ENCODE measurements at regions of chr7 and their contacts with region 1.

Region 1: DNA sequence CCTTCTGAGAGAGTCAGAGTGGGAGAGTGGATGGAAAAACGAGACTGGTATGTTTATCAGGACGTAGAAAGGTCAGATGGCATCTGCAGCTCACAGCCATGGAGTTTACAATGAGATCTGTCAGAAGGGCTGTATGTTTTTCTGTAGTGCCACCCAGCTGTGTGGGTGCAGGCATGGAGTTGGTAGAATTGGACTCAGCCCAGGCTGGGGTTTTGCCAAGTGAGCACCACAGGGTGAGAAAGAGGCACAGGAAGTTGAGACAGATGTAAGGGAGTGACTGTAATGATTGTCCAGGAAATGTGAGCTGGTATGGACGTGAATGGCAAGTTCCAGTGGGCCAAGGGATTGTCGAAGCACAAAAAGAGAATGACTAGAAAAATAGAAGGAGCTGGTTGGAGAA is 9.1 kb upstream of the ZYX start:
- DNase-seq: peak; percentile 77 to 87 (median 82)
- H3K4me3 ChIP-seq: peak overlapping the region in 1 of 3 experiments; percentile 18
- H3K4me3 Mint-ChIP-seq: peak overlapping the region in 1 of 2 donors; percentile 48
- H3K27ac ChIP-seq: peak overlapping the region; percentile 36 to 66
- H3K27ac Mint-ChIP-seq: peak overlapping the region; percentile 77 to 92 (median 83)
- H3K4me1 ChIP-seq: peaks cover 56 to 58% of the 10 kb centered on the region in 2 donors
- H3K4me1 Mint-ChIP-seq: peaks cover 56% of the 10 kb centered on the region
- H3K27me3 ChIP-seq: no peaks in the 10 kb centered on the region
- H3K27me3 Mint-ChIP-seq: peaks cover 0 to 6% (median 0%) of the 10 kb centered on the region in 3 donors
- CTCF ChIP-seq: peak; percentile 9

Region 2: DNA sequence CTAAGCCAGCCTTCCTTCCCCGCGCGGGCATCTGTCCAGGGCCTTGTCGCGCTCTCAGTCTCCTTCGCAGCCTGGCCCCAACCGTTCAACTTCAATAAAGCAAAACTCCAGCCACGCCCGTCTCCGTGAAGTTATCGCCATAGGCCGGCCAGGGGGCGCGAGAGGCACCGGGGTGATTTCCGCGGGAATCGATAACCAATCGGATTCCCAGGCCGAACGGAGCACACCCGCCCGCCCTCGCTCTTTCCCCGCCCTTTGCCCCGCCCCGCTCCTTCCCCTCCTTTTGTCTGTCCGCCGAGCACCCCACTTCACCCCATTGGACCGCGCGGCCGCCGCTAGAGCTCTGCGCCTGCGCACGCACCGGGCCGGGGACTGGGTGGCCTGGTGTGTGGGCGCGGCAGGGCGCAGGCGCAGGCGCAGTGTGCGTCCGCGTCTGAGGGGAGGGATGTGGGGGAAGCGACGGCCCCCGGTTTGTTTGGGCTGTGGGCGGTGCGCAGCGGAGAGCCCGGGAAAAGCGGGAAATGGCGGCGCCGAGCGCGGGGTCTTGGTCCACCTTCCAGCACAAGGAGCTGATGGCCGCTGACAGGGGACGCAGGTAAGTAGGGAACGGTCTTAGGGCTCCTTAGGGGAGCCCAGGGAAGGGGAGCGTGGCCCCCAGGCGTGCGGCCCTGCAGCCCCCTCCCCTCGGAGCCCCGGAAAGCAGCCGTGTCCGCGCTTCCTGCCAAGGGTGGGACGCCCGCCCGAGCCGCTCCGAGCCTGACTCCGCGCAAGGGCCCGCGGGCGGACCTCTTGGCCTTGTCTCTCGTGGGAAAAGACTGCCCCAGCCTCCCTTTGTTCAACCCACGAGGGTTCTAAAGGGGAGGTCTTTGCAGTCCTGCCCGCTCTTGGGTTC is 83.9 kb before region 1 on chr7 and contains the start of gene CASP2:
- intact Hi-C with region 1: loop called (anchors 2 to 10 kb)
- DNase-seq: peak; percentile 96 to 97 (median 97)
- H3K4me3 ChIP-seq: peak within 1 kb of the TSS; percentile 82 to 88 (median 86)
- H3K4me3 Mint-ChIP-seq: peak within 1 kb of the TSS; percentile 89 to 95
- H3K27ac ChIP-seq: peak within 1 kb of the TSS; percentile 26 to 74
- H3K27ac Mint-ChIP-seq: peak within 1 kb of the TSS; percentile 80 to 90 (median 88)
- H3K4me1 ChIP-seq: peaks cover 31% of the 10 kb centered on the region in 2 donors
- H3K4me1 Mint-ChIP-seq: peaks cover 38% of the 10 kb centered on the region
- H3K27me3 ChIP-seq: no peaks in the 10 kb centered on the region
- H3K27me3 Mint-ChIP-seq: peaks cover 0 to 3% (median 2%) of the 10 kb centered on the region in 3 donors
- CTCF ChIP-seq: no peak
- polyA plus RNA-seq, gene CASP2: 7.9 to 30.2 (median 12.2) TPM